Right cardiac atrium (tissue), 5 donors: ENCODE measurements at regions of chr2 and their contacts with region 1.

Region 1: GRCh38 chr2:59301466-59302402 is 1060.6 kb upstream of the FANCL start:
- DNase-seq: peak; percentile 13 to 21 (median 19)
- ATAC-seq: peak; percentile 77 to 78
- H3K4me3 ChIP-seq: no peak overlapping the region
- H3K27ac ChIP-seq: no peak overlapping the region
- H3K4me1 ChIP-seq: no peaks in the 10 kb centered on the region
- H3K27me3 ChIP-seq: no peaks in the 10 kb centered on the region

Region 2: DNA sequence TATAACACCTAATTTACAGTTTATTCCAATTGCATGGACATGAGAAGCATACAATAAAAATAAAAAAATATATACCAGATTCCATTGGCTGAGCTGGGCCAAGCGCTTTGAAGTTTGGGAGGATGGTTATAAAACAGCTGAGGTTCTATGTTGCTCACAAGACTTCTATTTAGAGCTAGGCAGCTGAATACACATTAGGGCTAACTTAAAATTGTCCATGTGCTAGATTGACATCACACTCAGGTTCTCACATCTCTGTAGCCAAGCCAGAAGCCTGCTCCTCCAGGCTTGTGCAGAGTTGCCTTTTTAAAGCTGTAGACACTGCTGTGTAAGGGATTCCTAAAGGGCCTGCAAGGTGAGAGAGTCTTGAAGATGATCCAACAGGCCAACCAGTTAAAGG is 189.5 kb before region 1 on chr2:
- intact Hi-C with region 1: no loop called
- DNase-seq: no peak
- ATAC-seq: no peak
- H3K4me3 ChIP-seq: no peak overlapping the region
- H3K27ac ChIP-seq: no peak overlapping the region
- H3K4me1 ChIP-seq: no peaks in the 10 kb centered on the region
- H3K27me3 ChIP-seq: no peaks in the 10 kb centered on the region

Region 3: DNA sequence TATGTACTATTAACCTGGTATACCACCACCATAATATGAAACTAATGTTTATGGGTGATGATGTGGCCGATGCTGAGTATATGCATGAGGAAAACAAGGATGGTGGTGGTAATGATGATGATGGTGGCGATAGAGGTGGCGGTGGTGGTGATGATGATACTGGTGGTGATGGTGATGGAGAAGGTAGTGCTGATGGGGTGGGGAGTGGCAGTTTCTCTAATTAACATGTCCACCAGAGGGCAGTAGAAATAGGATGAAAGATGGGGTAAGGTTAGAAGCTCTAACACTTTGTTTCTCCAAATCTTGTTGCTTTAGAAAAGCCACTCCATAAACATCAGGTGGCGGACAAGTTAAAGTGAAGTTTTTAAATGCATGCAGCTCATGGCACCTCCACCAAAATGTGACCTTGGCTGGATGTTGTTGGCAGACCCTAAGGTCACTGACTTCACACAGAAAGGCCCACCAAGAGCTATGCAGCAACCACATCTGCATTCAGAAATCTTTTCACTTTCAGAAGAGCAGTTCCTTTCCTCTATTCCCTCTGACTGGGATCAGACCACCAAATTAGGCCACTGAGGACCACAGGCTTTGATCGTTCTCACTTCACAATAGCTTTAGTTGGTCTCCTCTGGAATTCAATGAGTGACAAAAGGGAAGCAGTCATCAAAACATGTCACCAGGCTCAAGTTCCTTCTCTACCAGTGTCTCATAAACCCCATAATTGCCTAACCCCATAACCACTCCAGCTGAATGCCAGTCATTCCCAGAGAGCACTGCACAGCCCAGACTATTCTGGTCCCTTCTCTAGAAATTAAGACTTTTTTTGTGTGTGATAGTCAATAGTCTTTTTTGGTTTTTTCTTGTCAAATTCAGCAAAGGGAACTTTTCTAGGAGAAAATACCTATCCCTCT is 1259.3 kb after region 1 on chr2:
- intact Hi-C with region 1: loop called in 2 of 4 experiments (anchors 5 to 10 kb)
- DNase-seq: no peak
- ATAC-seq: peak; percentile 48 to 56
- H3K4me3 ChIP-seq: no peak overlapping the region
- H3K27ac ChIP-seq: no peak overlapping the region
- H3K4me1 ChIP-seq: no peaks in the 10 kb centered on the region
- H3K27me3 ChIP-seq: peaks cover 3% of the 10 kb centered on the region

Region 4: DNA sequence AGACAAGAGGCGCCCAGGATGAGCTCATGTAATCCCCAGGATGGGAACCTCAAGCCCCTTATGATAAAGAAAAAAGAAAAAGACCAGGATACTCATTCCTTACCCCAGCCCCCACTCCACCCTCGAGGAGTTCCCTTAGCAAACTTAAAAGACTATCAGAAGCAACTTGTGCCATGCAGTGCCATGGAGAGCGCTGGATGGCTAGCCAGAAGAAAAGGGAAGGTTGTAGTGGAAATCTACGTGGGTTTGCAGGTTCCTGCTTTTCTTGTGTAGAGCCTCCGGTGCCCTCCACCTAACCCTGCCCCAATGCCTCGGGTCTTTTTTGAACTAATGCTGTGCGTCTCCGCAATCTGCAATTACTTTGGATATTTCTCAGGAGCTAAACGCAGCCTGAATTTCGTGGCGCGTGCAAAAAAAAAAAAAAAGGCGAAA is 1268.0 kb after region 1 on chr2:
- intact Hi-C with region 1: loop called (anchors 5 to 10 kb)
- DNase-seq: no peak
- ATAC-seq: no peak
- H3K4me3 ChIP-seq: peak overlapping the region; percentile 30
- H3K27ac ChIP-seq: no peak overlapping the region
- H3K4me1 ChIP-seq: no peaks in the 10 kb centered on the region
- H3K27me3 ChIP-seq: peaks cover 19% of the 10 kb centered on the region